Lower leg skin (tissue), 4 donors: ENCODE measurements at regions of chr11 and their contacts with region 1.

Region 1: DNA sequence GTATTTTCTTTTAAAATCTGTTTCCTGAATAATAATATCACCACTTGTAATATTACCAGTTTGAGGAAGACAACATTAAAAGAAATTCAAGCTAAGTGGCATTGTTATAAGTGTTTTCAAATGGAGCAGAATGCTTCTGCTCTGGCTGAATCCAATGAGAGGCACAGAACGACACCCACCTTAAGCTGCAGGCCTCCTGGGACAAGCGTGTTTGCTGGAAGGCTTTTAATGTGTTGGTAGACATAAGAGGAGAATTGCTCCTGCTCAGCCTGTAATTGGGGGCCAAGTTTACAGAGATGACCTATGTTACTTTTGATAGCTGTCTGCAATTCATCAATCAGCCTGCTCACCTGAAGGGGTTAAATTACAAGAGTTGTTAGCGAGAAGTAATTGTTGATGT is 242.2 kb downstream of the DCDC1 start:
- DNase-seq: no peak
- H3K4me3 ChIP-seq: no peak overlapping the region
- CTCF ChIP-seq: no peak
- POLR2A ChIP-seq: no peak

Region 2: DNA sequence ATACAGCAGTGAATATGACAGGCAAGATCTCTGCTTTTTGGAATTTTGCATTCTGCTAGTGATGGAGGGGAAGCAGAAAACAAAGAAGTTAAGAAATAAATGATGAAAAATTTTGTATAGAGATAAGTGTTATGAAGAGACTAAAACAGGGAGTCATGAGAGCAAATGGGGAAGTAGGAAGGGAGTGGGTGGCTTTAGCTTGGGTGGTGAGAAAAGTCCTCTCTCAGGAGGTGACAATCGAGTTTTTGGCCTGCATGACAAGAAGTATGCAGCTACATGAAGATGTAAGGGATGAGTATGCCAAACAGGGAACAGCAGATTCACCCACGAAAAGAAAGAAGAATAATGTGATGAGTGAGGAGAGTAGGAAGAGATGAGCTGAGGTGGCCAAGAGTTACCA is 460.5 kb before region 1 on chr11:
- intact Hi-C with region 1: loop called (anchors 5 kb)
- DNase-seq: no peak
- H3K4me3 ChIP-seq: no peak overlapping the region
- CTCF ChIP-seq: no peak
- POLR2A ChIP-seq: no peak